K562 (cell line): ENCODE measurements at regions of chr21 and their contacts with region 1.

Region 1: GRCh38 chr21:15355066-15355465 is 290.3 kb upstream of the NRIP1 start:
- DNase-seq: no peak
- ATAC-seq: no peak
- H3K4me3 ChIP-seq: no peak overlapping the region
- H3K27ac ChIP-seq: no peak overlapping the region
- H3K4me1 ChIP-seq: no peaks in the 10 kb centered on the region
- H3K27me3 ChIP-seq: no peaks in the 10 kb centered on the region
- CTCF ChIP-seq: no peak
- EP300 ChIP-seq: no peak
- POLR2A ChIP-seq: no peak
- RAD21 ChIP-seq: no peak

Region 2: GRCh38 chr21:15293240-15293639 is 61.8 kb before region 1 on chr21:
- CTCF ChIA-PET with region 1: no interaction called
- POLR2A ChIA-PET with region 1: no interaction called
- in situ Hi-C with region 1: no loop called
- intact Hi-C with region 1: loop called (anchors 10 kb)
- DNase-seq: peak in 1 of 4 experiments; percentile 23
- ATAC-seq: no peak
- H3K4me3 ChIP-seq: no peak overlapping the region
- H3K27ac ChIP-seq: no peak overlapping the region
- H3K4me1 ChIP-seq: peaks cover 0 to 11% of the 10 kb centered on the region in 2 experiments; a peak in 2 of 5 replicates
- H3K27me3 ChIP-seq: peaks cover 0 to 5% of the 10 kb centered on the region in 2 experiments; a peak in 1 of 5 replicates
- CTCF ChIP-seq: no peak
- EP300 ChIP-seq: no peak
- POLR2A ChIP-seq: no peak
- RAD21 ChIP-seq: no peak